ENCODE measurements at regions of chr13 and their contacts with region 1.

Region 1: DNA sequence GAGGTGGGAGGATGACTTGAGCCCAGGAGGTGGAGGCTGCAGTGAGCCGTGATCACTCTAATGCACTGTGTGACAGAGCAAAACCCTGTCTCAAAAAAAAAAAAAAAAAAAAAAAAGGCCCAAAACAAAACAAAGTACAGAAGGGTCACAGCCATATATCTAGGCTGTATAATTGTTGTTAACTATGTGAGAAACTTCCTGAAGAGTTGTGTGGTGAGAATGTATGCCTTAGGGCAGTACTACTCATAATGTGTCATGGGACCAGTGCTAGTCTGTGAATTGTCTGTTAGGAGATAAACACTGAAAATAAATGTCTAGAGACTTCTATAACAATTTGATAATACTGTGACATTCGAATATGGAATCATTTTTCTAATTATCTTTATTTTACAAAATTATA is 43.1 kb downstream of the PAN3 start:
- DNase-seq: peak; percentile 83
- ATAC-seq: peak; percentile 97
- H3K4me3 ChIP-seq: no peak overlapping the region
- H3K27ac ChIP-seq: peak overlapping the region; percentile 46
- H3K4me1 ChIP-seq: peaks cover 30% of the 10 kb centered on the region
- H3K27me3 ChIP-seq: no peaks in the 10 kb centered on the region
- CTCF ChIP-seq: no peak

Region 2: DNA sequence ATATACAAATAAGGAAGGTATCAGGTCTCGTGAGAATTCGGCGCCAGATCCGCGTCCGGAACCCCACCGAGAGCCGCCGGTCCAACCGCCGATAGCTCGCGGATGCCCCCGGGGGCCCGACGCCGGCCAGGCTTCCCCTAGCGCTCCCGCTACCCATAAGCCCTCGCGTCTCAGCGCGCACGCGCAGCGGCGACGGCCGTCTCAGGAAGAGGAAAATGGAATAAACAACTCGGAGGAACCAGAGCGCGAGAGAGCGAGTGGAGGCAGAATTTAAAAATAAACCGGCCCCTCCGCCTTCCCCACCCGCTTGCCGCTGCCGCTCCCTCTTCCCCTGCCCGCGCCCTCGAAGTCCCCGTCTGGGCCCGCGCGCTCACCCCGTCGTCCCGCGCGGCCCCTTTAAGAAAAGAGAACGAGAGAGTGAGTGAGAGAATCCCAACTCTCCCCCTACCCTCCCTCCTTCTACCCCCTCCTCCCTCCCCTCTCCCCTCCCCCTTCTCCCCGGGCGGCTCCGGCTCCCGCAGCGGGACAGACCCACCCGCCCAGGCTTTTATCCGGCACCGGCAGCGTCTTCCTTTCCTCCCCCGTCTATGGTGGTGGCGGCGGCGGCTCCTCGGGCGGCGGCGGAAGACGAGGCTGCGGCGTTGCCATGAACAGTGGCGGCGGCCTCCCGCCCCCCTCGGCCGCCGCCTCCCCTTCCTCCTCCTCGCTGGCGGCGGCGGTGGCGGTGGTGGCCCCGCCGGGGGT is 43.2 kb before region 1 on chr13 and contains the start of gene PAN3:
- CTCF ChIA-PET with region 1: no interaction called
- POLR2A ChIA-PET with region 1: no interaction called
- intact Hi-C with region 1: loop called (anchors 2 kb)
- DNase-seq: peak; percentile 83
- ATAC-seq: peak; percentile 59
- H3K4me3 ChIP-seq: peak within 1 kb of the TSS; percentile 90
- H3K27ac ChIP-seq: peak within 1 kb of the TSS; percentile 83
- H3K4me1 ChIP-seq: peaks cover 7% of the 10 kb centered on the region; the same call in 1 of the 2 replicates
- H3K27me3 ChIP-seq: no peaks in the 10 kb centered on the region
- CTCF ChIP-seq: no peak
- total RNA-seq, gene PAN3: 14.6 and 21.8 TPM in 2 replicates

Region 3: DNA sequence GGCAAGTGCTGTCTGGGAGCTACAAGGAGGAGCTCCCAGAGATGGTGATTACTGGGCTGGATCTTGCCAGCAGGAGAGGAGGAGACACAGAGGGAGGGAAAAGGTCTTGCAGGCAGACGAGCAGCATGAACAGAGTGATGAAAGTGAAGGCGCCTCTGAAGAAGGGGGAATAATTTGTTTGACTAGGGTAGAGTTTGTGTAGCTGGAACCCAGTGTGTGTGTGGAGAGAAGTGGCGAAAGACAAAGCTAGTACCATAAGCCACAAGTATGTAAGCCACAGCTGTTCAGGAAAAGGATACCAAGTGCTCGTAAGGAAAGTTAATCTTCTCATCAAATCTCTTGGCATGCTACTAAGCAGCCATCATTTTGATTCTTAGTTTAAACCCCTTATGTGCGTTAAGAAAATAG is 308.1 kb after region 1 on chr13:
- CTCF ChIA-PET with region 1: no interaction called
- POLR2A ChIA-PET with region 1: no interaction called
- intact Hi-C with region 1: no loop called
- DNase-seq: no peak
- ATAC-seq: no peak
- H3K4me3 ChIP-seq: no peak overlapping the region
- H3K27ac ChIP-seq: no peak overlapping the region
- H3K4me1 ChIP-seq: no peaks in the 10 kb centered on the region
- H3K27me3 ChIP-seq: peaks cover 60% of the 10 kb centered on the region
- CTCF ChIP-seq: no peak

Region 4: GRCh38 chr13:29067306-29067945 is 886.0 kb after region 1 on chr13:
- CTCF ChIA-PET with region 1: no interaction called
- POLR2A ChIA-PET with region 1: no interaction called
- intact Hi-C with region 1: no loop called
- DNase-seq: no peak
- ATAC-seq: no peak
- H3K4me3 ChIP-seq: no peak overlapping the region
- H3K27ac ChIP-seq: no peak overlapping the region
- H3K4me1 ChIP-seq: no peaks in the 10 kb centered on the region
- H3K27me3 ChIP-seq: no peaks in the 10 kb centered on the region
- CTCF ChIP-seq: no peak

Measured in PC-3 (cell line).